Panc1 (cell line): ENCODE measurements at regions of chr11 and their contacts with region 1.

Region 1: GRCh38 chr11:9565822-9566560 is 7.5 kb upstream of the WEE1 start:
- DNase-seq: peak; percentile 100
- ATAC-seq: peak; percentile 93
- H3K4me3 ChIP-seq: peak overlapping the region in 1 of 2 experiments; percentile 21; a peak in 2 of 4 replicates
- H3K27ac ChIP-seq: peak overlapping the region; percentile 87
- H3K4me1 ChIP-seq: peaks cover 62% of the 10 kb centered on the region
- H3K27me3 ChIP-seq: no peaks in the 10 kb centered on the region
- CTCF ChIP-seq: no peak

Region 2: DNA sequence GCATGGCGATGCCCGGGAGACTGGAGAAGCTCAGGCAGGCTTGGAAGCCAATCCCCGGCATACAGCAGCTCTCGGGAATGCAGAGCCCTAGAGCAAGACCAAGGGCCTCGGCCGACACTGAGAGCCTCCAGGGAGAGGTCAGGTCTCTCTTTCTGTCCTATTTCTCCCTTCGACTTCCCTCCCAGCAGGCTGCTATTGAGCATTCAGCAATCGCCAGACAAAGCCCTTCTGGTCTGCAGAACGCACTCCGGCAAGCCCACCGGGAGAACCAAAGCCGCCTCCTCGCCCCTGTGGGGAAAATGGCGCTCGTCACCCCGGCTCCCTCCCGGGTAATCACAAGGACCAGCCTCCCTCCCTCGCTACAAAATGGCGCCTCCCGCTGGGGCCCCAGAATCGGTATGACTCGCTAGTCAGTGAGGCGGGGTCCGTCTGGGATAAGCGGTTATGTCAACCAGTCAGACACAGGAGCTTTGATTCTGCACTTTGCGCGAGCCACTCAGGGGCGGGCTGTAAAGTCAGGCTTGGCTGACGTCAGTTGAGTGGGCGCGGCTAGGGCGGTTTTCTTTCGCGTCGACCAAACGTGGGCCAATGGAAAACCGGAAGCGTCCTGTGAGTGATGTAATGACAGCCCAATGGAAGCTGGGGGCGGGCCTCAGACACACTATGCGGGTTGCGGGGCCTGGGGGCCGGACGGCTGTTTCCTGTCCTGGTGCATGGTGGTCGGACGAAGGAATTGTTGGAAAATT is 105.5 kb before region 1 on chr11 and contains the start of gene ZNF143:
- CTCF ChIA-PET with region 1: no interaction called
- POLR2A ChIA-PET with region 1: interaction called, 9 read pairs
- in situ Hi-C with region 1: no loop called
- intact Hi-C with region 1: loop called (anchors 5 kb)
- DNase-seq: peak; percentile 100
- ATAC-seq: peak; percentile 95
- H3K4me3 ChIP-seq: peak within 1 kb of the TSS; percentile 94
- H3K27ac ChIP-seq: peak within 1 kb of the TSS; percentile 100
- H3K4me1 ChIP-seq: peaks cover 23% of the 10 kb centered on the region
- H3K27me3 ChIP-seq: no peaks in the 10 kb centered on the region
- CTCF ChIP-seq: no peak
- total RNA-seq, gene ZNF143: 30.2 TPM

Region 3: DNA sequence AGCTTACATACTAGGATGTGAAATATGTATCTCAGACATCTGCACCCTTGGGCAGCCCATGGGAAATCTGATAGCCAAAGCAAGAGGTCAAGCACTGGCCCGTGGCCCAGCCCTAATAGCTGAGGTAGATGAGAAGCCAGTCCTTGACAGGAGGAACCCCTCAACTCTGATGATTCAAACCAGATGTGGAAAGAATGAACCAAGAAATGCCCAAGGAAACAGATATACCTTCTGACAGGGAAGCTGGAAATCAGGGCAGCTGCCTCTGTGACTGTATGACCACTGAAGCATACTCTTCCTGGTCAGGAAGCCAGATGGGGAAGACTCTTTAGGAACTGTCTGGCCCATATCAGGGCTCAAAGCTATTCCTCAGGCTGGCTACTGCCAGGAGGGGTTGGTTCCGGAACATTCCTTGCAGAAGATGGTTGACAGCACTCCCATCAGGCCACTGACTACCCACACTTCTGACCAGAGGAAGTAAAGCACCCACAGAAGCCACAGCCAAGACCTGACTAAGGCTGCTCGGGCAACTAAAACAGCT is 222.1 kb after region 1 on chr11:
- CTCF ChIA-PET with region 1: no interaction called
- POLR2A ChIA-PET with region 1: interaction called, 11 read pairs
- in situ Hi-C with region 1: no loop called
- intact Hi-C with region 1: no loop called
- DNase-seq: no peak
- ATAC-seq: no peak
- H3K4me3 ChIP-seq: no peak overlapping the region
- H3K27ac ChIP-seq: peak overlapping the region; percentile 24
- H3K4me1 ChIP-seq: peaks cover 18% of the 10 kb centered on the region
- H3K27me3 ChIP-seq: no peaks in the 10 kb centered on the region
- CTCF ChIP-seq: no peak